Naive thymus-derived CD4-positive, alpha-beta T cell (primary cell): ENCODE measurements at regions of chr3 and their contacts with region 1.

Region 1: DNA sequence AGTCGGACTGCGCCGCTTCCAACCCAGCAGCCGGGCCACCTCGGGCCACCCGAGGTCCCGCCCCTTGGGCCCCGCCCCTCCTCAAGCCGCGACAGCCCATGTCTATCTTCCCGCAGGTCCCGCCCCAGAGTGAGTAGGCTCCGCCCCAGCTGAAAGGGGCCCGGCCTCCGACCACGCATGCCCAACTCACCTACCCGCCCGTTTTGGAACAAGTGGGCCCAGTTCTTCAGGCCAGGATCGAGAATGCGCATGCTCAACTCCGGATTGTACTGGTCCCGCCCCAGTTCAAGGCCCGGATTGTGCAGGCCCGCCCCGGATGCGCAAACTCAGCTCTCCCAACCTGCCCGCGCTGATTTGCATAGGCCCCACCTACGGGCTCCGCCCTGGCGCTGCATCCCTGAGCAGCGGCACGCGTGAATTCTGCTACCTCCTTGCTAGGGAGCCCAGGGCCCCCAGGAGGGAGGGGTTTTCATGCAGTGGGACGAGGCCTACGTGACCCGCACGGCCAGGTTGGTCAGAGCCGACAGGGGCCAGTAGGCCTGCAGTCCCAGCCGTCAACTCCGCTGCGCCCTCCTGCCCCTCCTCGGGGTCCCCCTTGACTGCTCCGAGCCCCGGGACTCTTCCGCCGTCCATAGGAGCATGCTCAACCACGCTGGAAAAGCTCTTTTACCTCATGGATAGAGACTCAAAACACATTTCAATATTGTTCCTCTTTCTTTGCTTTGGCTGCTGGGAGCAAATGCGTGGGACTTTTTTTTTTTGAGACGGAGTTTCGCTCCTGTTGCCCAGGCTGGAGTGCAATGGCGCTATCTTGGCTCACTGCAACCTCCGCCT is at the start of gene PFKFB4:
- DNase-seq: peak; percentile 97 to 100 (median 99)
- ATAC-seq: peak; percentile 91
- H3K4me3 ChIP-seq: peak within 1 kb of the TSS; percentile 85
- H3K4me3 Mint-ChIP-seq: peak within 1 kb of the TSS; percentile 77 to 93 (median 84)
- H3K27ac ChIP-seq: peak within 1 kb of the TSS; percentile 52
- H3K27ac Mint-ChIP-seq: peak within 1 kb of the TSS; percentile 62 to 90 (median 80)
- H3K4me1 ChIP-seq: peaks cover 5 to 10% of the 10 kb centered on the region in 2 donors
- H3K4me1 Mint-ChIP-seq: peaks cover 11 to 66% (median 24%) of the 10 kb centered on the region in 7 donors
- H3K27me3 ChIP-seq: no peaks in the 10 kb centered on the region
- H3K27me3 Mint-ChIP-seq: peaks cover 0 to 3% (median 0%) of the 10 kb centered on the region in 5 donors
- total RNA-seq, gene PFKFB4: 3.0 to 64.2 (median 3.7) TPM

Region 2: GRCh38 chr3:48188266-48189201 is 368.5 kb before region 1 on chr3 and contains the start of gene CDC25A:
- CTCF ChIA-PET with region 1: no interaction called
- POLR2A ChIA-PET with region 1: no interaction called
- intact Hi-C with region 1: loop called (anchors 1 to 2 kb)
- DNase-seq: peak; percentile 69 to 94 (median 87)
- ATAC-seq: peak; percentile 100
- H3K4me3 ChIP-seq: peak within 1 kb of the TSS; percentile 88
- H3K4me3 Mint-ChIP-seq: peak within 1 kb of the TSS; percentile 89 to 96 (median 94)
- H3K27ac ChIP-seq: peak within 1 kb of the TSS; percentile 57
- H3K27ac Mint-ChIP-seq: peak within 1 kb of the TSS in 8 of 9 donors; percentile 8 to 84 (median 66)
- H3K4me1 ChIP-seq: peaks cover 4 to 6% of the 10 kb centered on the region in 2 donors
- H3K4me1 Mint-ChIP-seq: peaks cover 6 to 36% (median 13%) of the 10 kb centered on the region in 7 donors
- H3K27me3 ChIP-seq: no peaks in the 10 kb centered on the region
- H3K27me3 Mint-ChIP-seq: peaks cover 0 to 21% (median 14%) of the 10 kb centered on the region in 5 donors
- total RNA-seq, gene CDC25A: 0.61 to 20.7 TPM in 2 of 5 experiments, not detected in the others

Region 3: DNA sequence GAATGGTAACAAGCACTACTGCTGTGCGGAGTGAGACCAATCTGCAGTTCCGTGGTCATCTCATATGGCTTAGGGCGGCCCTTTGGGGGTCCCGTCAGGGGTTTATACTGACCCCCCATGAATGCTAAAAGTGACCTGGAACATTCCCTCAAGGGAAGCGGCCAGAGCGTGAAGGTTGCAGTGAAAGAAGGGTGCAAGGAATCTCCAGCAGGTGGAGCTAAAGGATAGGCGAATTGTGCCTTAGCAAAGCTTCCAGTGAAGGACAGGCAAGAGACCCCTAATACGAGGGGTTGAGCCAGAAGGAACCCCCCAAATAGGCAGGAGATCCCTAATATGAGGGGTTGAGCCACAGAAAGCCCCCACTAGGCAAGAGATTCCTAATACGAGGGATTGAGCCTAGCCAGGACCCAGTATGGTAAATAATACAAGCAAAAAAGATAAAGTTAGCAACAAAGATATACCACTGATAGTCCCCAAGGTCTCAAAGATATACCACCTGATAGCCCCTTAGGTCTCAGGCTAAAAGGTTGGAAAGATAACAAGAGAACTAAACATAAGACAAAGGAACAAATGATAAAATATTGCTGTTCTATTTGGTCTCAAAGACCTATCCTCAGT is 283.3 kb before region 1 on chr3:
- CTCF ChIA-PET with region 1: interaction called, 3 read pairs
- POLR2A ChIA-PET with region 1: interaction called, 3 read pairs
- intact Hi-C with region 1: loop called (anchors 1 to 2 kb)
- DNase-seq: peak in 8 of 9 donors; percentile 37 to 66 (median 55)
- ATAC-seq: peak; percentile 60
- H3K4me3 ChIP-seq: no peak overlapping the region
- H3K4me3 Mint-ChIP-seq: no peak overlapping the region
- H3K27ac ChIP-seq: no peak overlapping the region
- H3K27ac Mint-ChIP-seq: peak overlapping the region in 4 of 9 donors; percentile 8 to 74 (median 51)
- H3K4me1 ChIP-seq: peaks cover 4 to 14% of the 10 kb centered on the region in 2 donors
- H3K4me1 Mint-ChIP-seq: peaks cover 6 to 29% (median 21%) of the 10 kb centered on the region in 7 donors
- H3K27me3 ChIP-seq: no peaks in the 10 kb centered on the region
- H3K27me3 Mint-ChIP-seq: no peaks in the 10 kb centered on the region

Region 4: DNA sequence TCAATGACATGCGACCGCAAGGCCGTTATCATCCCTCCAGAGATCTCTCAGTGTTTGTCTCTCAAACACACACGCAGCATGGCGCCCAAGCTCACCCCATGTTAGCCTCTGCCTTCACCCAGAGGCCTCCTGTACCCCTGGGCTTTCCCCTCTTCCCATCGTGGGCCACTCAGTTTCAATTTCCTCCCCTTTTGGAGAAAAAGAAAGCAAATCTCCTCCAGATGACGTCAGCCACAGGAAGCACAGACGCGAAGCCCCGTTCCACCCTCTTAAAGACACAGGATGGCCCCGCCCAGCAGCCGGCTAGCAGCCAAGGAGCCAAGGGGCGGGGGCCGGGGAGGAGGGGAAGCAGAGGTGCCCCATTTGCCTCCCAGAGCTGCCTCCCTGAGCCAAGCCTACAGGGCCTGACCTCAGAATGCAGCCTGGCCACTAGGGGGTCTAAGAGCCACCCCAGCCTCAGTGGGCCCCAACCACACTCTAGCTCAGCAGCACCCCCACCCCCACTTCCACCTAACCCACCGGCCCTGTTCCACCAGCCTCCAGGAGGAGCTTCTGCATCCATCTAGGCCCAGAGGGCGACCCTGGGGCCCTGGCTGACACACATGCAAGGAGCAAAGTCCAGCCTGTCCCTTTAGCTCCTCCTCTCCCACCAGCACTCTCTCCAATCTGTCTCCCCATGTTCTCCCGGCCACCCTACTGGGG is 83.9 kb before region 1 on chr3:
- CTCF ChIA-PET with region 1: no interaction called
- POLR2A ChIA-PET with region 1: interaction called, 5 read pairs
- intact Hi-C with region 1: loop called (anchors 1 to 2 kb)
- DNase-seq: peak; percentile 79 to 98 (median 95)
- ATAC-seq: peak; percentile 93
- H3K4me3 ChIP-seq: peak overlapping the region; percentile 92
- H3K4me3 Mint-ChIP-seq: peak overlapping the region; percentile 87 to 100 (median 94)
- H3K27ac ChIP-seq: peak overlapping the region; percentile 95
- H3K27ac Mint-ChIP-seq: peak overlapping the region; percentile 90 to 100 (median 99)
- H3K4me1 ChIP-seq: peaks cover 46 to 54% of the 10 kb centered on the region in 2 donors
- H3K4me1 Mint-ChIP-seq: peaks cover 41 to 75% (median 64%) of the 10 kb centered on the region in 7 donors
- H3K27me3 ChIP-seq: no peaks in the 10 kb centered on the region
- H3K27me3 Mint-ChIP-seq: peaks cover 0 to 2% (median 0%) of the 10 kb centered on the region in 5 donors

Region 5: GRCh38 chr3:48635222-48636021 is 78.4 kb after region 1 on chr3 and contains the start of gene SLC26A6:
- CTCF ChIA-PET with region 1: no interaction called
- POLR2A ChIA-PET with region 1: interaction called, 5 read pairs
- intact Hi-C with region 1: loop called (anchors 1 kb)
- DNase-seq: peak; percentile 81 to 98 (median 86)
- ATAC-seq: peak; percentile 98
- H3K4me3 ChIP-seq: peak within 1 kb of the TSS; percentile 76
- H3K4me3 Mint-ChIP-seq: peak within 1 kb of the TSS; percentile 79 to 92 (median 88)
- H3K27ac ChIP-seq: peak within 1 kb of the TSS; percentile 70
- H3K27ac Mint-ChIP-seq: peak within 1 kb of the TSS in 7 of 9 donors; percentile 12 to 84 (median 68)
- H3K4me1 ChIP-seq: peaks cover 0 to 11% of the 10 kb centered on the region in 2 donors
- H3K4me1 Mint-ChIP-seq: peaks cover 4 to 31% (median 22%) of the 10 kb centered on the region in 7 donors
- H3K27me3 ChIP-seq: no peaks in the 10 kb centered on the region
- H3K27me3 Mint-ChIP-seq: no peaks in the 10 kb centered on the region
- total RNA-seq, gene SLC26A6: 15.1 to 37.6 (median 31.2) TPM

Region 6: GRCh38 chr3:48898383-48899234 is 341.6 kb after region 1 on chr3 and contains the start of gene SLC25A20:
- CTCF ChIA-PET with region 1: no interaction called
- POLR2A ChIA-PET with region 1: no interaction called
- intact Hi-C with region 1: loop called in 1 of 2 experiments (anchors 10 kb)
- DNase-seq: peak; percentile 78 to 95 (median 85)
- ATAC-seq: peak; percentile 98
- H3K4me3 ChIP-seq: peak within 1 kb of the TSS; percentile 91
- H3K4me3 Mint-ChIP-seq: peak within 1 kb of the TSS; percentile 89 to 99 (median 94)
- H3K27ac ChIP-seq: peak within 1 kb of the TSS; percentile 76
- H3K27ac Mint-ChIP-seq: peak within 1 kb of the TSS; percentile 83 to 99 (median 93)
- H3K4me1 ChIP-seq: peaks cover 21 to 23% of the 10 kb centered on the region in 2 donors
- H3K4me1 Mint-ChIP-seq: peaks cover 27 to 51% (median 41%) of the 10 kb centered on the region in 7 donors
- H3K27me3 ChIP-seq: no peaks in the 10 kb centered on the region
- H3K27me3 Mint-ChIP-seq: no peaks in the 10 kb centered on the region
- total RNA-seq, gene SLC25A20: 6.6 to 27.3 (median 12.8) TPM

Region 7: DNA sequence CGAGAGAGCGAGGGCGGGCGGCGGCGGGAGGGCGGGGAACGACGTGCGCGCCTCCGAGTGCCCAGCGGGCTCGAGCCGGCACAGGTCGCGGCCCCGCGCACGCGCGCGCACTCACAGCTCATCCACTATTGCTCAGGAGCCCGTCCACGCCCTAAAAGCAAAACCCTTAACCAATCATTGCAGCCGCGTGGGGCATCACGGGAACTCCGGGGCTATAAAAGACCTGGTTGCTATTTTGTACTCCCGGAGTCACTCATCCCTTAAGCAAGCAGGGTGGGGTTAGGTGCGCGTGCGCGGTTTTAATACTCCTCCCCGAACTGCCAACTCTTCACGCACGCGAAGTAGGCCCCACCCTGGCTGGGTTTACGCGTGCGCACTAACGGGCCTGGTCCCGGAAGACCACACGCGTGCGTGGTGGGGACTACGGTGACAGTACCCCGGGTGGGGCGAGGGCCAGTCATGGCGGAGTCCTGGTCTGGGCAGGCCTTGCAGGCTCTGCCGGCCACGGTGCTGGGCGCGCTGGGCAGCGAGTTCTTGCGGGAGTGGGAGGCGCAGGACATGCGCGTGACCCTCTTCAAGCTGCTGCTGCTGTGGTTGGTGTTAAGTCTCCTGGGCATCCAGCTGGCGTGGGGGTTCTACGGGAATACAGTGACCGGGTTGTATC is 855.1 kb after region 1 on chr3 and contains the starts of genes RHOA and TCTA:
- CTCF ChIA-PET with region 1: no interaction called
- POLR2A ChIA-PET with region 1: no interaction called
- intact Hi-C with region 1: loop called in 1 of 2 experiments (anchors 5 kb)
- DNase-seq: peak; percentile 94 to 100 (median 99)
- ATAC-seq: peak; percentile 90
- H3K4me3 ChIP-seq: peak within 1 kb of the TSS; percentile 86
- H3K4me3 Mint-ChIP-seq: peak within 1 kb of the TSS; percentile 82 to 97 (median 94)
- H3K27ac ChIP-seq: peak within 1 kb of the TSS; percentile 96
- H3K27ac Mint-ChIP-seq: peak within 1 kb of the TSS; percentile 88 to 97 (median 95)
- H3K4me1 ChIP-seq: peaks cover 61 to 65% of the 10 kb centered on the region in 2 donors
- H3K4me1 Mint-ChIP-seq: peaks cover 51 to 82% (median 71%) of the 10 kb centered on the region in 7 donors
- H3K27me3 ChIP-seq: no peaks in the 10 kb centered on the region
- H3K27me3 Mint-ChIP-seq: peaks cover 0 to 2% (median 0%) of the 10 kb centered on the region in 5 donors
- total RNA-seq, gene RHOA: 212 to 411 (median 218) TPM
- total RNA-seq, gene TCTA: 24.9 to 34.5 (median 28.5) TPM